Transverse colon (tissue), 4 donors: ENCODE measurements at regions of chr10 and their contacts with region 1.

Region 1: GRCh38 chr10:49096890-49097445 is 18.4 kb downstream of the VSTM4 start:
- DNase-seq: no peak
- H3K4me3 ChIP-seq: no peak overlapping the region
- H3K27ac ChIP-seq: no peak overlapping the region
- H3K4me1 ChIP-seq: no peaks in the 10 kb centered on the region
- H3K27me3 ChIP-seq: no peaks in the 10 kb centered on the region
- CTCF ChIP-seq: no peak
- EP300 ChIP-seq: no peak
- POLR2A ChIP-seq: no peak

Region 2: DNA sequence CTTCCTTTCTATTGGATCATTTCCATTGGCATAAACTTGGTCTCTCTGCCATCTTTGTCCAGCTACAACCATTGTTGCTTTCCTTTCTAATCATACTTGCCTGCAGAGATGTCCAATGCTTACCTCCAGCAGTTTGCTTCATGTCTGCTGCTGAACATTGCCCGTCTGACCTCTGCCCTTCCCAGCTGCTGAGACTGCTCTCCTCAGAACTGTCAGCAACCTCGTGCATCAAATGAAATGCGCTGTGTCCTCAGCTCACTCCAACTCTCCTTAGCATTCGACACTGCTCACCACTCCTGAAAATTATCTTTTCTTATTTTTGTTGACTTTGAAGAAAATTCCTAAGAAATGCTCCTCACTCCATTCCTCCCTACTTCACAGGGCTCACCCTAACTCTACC is 31.9 kb after region 1 on chr10:
- in situ Hi-C with region 1: no loop called
- intact Hi-C with region 1: loop called (anchors 1 kb)
- DNase-seq: no peak
- H3K4me3 ChIP-seq: no peak overlapping the region
- H3K27ac ChIP-seq: no peak overlapping the region
- H3K4me1 ChIP-seq: no peaks in the 10 kb centered on the region
- H3K27me3 ChIP-seq: no peaks in the 10 kb centered on the region
- CTCF ChIP-seq: no peak
- EP300 ChIP-seq: no peak
- POLR2A ChIP-seq: no peak